Activated CD4-positive, alpha-beta T cell treated with anti-CD3 and anti-CD28 coated beads, Interleukin-2, amount 10 ng/mL, durations not matched to agents 24 days and 14 days (primary cell): ENCODE measurements at regions of chr3 and their contacts with region 1.

Region 1: GRCh38 chr3:108090701-108091451 is at the start of gene CD47:
- DNase-seq: peak; percentile 99
- H3K4me3 Mint-ChIP-seq: peak within 1 kb of the TSS; percentile 98
- H3K27ac Mint-ChIP-seq: peak within 1 kb of the TSS; percentile 100
- H3K4me1 Mint-ChIP-seq: peaks cover 35% of the 10 kb centered on the region
- H3K27me3 Mint-ChIP-seq: no peaks in the 10 kb centered on the region
- total RNA-seq, gene CD47: 104 and 109 TPM in 2 replicates

Region 2: GRCh38 chr3:107522510-107523288 is 568.2 kb before region 1 on chr3 and contains the start of gene BBX:
- intact Hi-C with region 1: loop called (anchors 2 kb)
- DNase-seq: peak; percentile 98
- H3K4me3 Mint-ChIP-seq: peak within 1 kb of the TSS; percentile 97
- H3K27ac Mint-ChIP-seq: peak within 1 kb of the TSS; percentile 94
- H3K4me1 Mint-ChIP-seq: peaks cover 25% of the 10 kb centered on the region
- H3K27me3 Mint-ChIP-seq: peaks cover 7% of the 10 kb centered on the region
- total RNA-seq, gene BBX: 37.2 and 39.6 TPM in 2 replicates

Region 3: GRCh38 chr3:107942244-107942643 is 148.6 kb before region 1 on chr3:
- intact Hi-C with region 1: loop called (anchors 1 kb)
- DNase-seq: peak; percentile 75
- H3K4me3 Mint-ChIP-seq: peak overlapping the region; percentile 43
- H3K27ac Mint-ChIP-seq: peak overlapping the region; percentile 73
- H3K4me1 Mint-ChIP-seq: peaks cover 22% of the 10 kb centered on the region
- H3K27me3 Mint-ChIP-seq: peaks cover 5% of the 10 kb centered on the region

Region 4: GRCh38 chr3:108100906-108101660 is 10.2 kb after region 1 on chr3:
- intact Hi-C with region 1: loop called (anchors 1 kb)
- DNase-seq: peak; percentile 80
- H3K4me3 Mint-ChIP-seq: peak overlapping the region; percentile 49
- H3K27ac Mint-ChIP-seq: peak overlapping the region; percentile 81
- H3K4me1 Mint-ChIP-seq: peaks cover 40% of the 10 kb centered on the region
- H3K27me3 Mint-ChIP-seq: peaks cover 19% of the 10 kb centered on the region

Region 5: DNA sequence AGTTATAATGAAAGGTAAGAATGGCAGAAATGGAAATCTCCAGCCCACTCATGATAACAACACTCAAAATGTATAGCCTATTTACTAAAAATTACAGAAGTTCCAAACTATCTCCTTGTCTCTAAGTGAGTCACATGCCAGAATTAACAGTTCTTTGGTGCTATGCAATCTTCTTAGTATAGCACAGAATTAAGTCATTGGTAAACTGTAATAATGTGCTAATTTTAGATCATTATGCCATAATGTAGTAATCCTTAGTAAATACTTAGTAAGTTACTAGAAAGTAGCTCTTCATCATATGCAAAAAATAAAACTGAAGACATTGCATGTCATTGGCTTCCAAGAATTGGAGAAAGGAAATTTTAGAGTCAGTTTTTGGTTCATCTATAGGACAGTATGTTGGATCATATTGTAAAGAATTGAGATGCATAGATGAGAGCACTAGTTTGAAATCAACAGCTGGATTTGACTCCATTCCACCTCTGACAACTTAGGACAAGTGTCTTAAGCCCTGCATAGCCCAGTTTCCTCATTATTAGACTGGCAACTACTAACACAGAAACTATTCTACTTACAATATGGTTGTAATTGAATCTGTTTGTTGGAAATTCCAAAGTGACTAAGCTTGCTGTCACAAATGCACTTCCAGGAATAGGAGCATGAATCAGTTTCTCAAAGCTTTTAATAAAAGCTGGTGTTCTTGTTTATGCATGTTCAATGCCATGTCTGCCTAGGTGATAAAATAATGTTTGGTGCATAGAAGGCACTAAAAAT is 40.0 kb after region 1 on chr3:
- intact Hi-C with region 1: loop called (anchors 1 kb)
- DNase-seq: no peak
- H3K4me3 Mint-ChIP-seq: peak overlapping the region; percentile 57
- H3K27ac Mint-ChIP-seq: peak overlapping the region; percentile 78
- H3K4me1 Mint-ChIP-seq: peaks cover 81% of the 10 kb centered on the region
- H3K27me3 Mint-ChIP-seq: no peaks in the 10 kb centered on the region

Region 6: GRCh38 chr3:108589146-108589997 is 498.5 kb after region 1 on chr3 and contains the starts of genes CIP2A and DZIP3:
- intact Hi-C with region 1: loop called (anchors 2 kb)
- DNase-seq: peak; percentile 95
- H3K4me3 Mint-ChIP-seq: peak within 1 kb of the TSS; percentile 97
- H3K27ac Mint-ChIP-seq: peak within 1 kb of the TSS; percentile 98
- H3K4me1 Mint-ChIP-seq: peaks cover 45% of the 10 kb centered on the region
- H3K27me3 Mint-ChIP-seq: no peaks in the 10 kb centered on the region
- total RNA-seq, gene CIP2A: 48.3 and 58.3 TPM in 2 replicates
- total RNA-seq, gene DZIP3: 4.1 and 4.7 TPM in 2 replicates